Caco-2 (cell line): ENCODE measurements at regions of chr2 and their contacts with region 1.

Region 1: GRCh38 chr2:108583903-108584520 is 49.7 kb downstream of the LIMS1 start:
- DNase-seq: peak; percentile 71 to 80
- H3K4me3 ChIP-seq: no peak overlapping the region
- H3K4me3 Mint-ChIP-seq: no peak overlapping the region
- H3K27ac Mint-ChIP-seq: no peak overlapping the region
- H3K4me1 ChIP-seq: peaks cover 12% of the 10 kb centered on the region; the same call in 1 of the 2 replicates
- H3K4me1 Mint-ChIP-seq: peaks cover 33% of the 10 kb centered on the region
- H3K27me3 ChIP-seq: no peaks in the 10 kb centered on the region
- H3K27me3 Mint-ChIP-seq: no peaks in the 10 kb centered on the region
- CTCF ChIP-seq: peak; percentile 82 to 83

Region 2: GRCh38 chr2:108215794-108216211 is 368.2 kb before region 1 on chr2:
- CTCF ChIA-PET with region 1: interaction called, 3 read pairs
- POLR2A ChIA-PET with region 1: no interaction called
- intact Hi-C with region 1: loop called (anchors 1 kb)
- DNase-seq: peak; percentile 46 to 48
- H3K4me3 ChIP-seq: no peak overlapping the region
- H3K4me3 Mint-ChIP-seq: no peak overlapping the region
- H3K27ac Mint-ChIP-seq: no peak overlapping the region
- H3K4me1 ChIP-seq: peaks cover 5% of the 10 kb centered on the region; the same call in 1 of the 2 replicates
- H3K4me1 Mint-ChIP-seq: no peaks in the 10 kb centered on the region
- H3K27me3 ChIP-seq: no peaks in the 10 kb centered on the region
- H3K27me3 Mint-ChIP-seq: no peaks in the 10 kb centered on the region
- CTCF ChIP-seq: peak; percentile 23 to 49

Region 3: DNA sequence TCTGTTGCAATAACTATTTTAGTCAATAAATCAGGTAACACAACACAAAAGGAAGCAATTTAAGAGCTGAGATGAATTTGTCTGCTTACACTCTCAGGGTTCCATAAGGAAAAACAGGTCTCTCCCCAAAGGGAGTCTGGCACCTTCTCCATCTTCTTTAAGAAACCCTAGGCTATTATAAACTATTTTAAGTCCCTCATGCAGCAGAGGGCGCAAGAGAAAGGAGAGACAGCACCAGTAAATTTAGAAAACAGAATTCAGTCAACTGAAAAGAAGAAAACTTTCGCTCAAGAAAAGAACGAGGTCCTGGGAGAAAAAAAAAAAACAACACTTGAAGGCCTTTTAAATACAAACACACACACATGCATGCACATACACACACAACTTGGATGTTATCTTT is 187.2 kb before region 1 on chr2:
- CTCF ChIA-PET with region 1: no interaction called
- POLR2A ChIA-PET with region 1: no interaction called
- intact Hi-C with region 1: loop called (anchors 1 kb)
- DNase-seq: peak; percentile 49 to 52
- H3K4me3 ChIP-seq: no peak overlapping the region
- H3K4me3 Mint-ChIP-seq: no peak overlapping the region
- H3K27ac Mint-ChIP-seq: no peak overlapping the region
- H3K4me1 ChIP-seq: no peaks in the 10 kb centered on the region
- H3K4me1 Mint-ChIP-seq: no peaks in the 10 kb centered on the region
- H3K27me3 ChIP-seq: no peaks in the 10 kb centered on the region
- H3K27me3 Mint-ChIP-seq: no peaks in the 10 kb centered on the region
- CTCF ChIP-seq: peak; percentile 24 to 35

Region 4: GRCh38 chr2:108423067-108423466 is 160.9 kb before region 1 on chr2:
- CTCF ChIA-PET with region 1: no interaction called
- POLR2A ChIA-PET with region 1: no interaction called
- intact Hi-C with region 1: no loop called
- DNase-seq: peak; percentile 28 to 42
- H3K4me3 ChIP-seq: no peak overlapping the region
- H3K4me3 Mint-ChIP-seq: peak overlapping the region; percentile 1
- H3K27ac Mint-ChIP-seq: peak overlapping the region; percentile 17
- H3K4me1 ChIP-seq: peaks cover 22% of the 10 kb centered on the region
- H3K4me1 Mint-ChIP-seq: peaks cover 27% of the 10 kb centered on the region
- H3K27me3 ChIP-seq: no peaks in the 10 kb centered on the region
- H3K27me3 Mint-ChIP-seq: no peaks in the 10 kb centered on the region
- CTCF ChIP-seq: no peak

Region 5: GRCh38 chr2:108448678-108449493 is 135.1 kb before region 1 on chr2 and contains the start of gene GCC2:
- CTCF ChIA-PET with region 1: interaction called, 4 read pairs
- POLR2A ChIA-PET with region 1: no interaction called
- intact Hi-C with region 1: loop called (anchors 1 kb)
- DNase-seq: peak; percentile 97
- H3K4me3 ChIP-seq: peak within 1 kb of the TSS; percentile 83
- H3K4me3 Mint-ChIP-seq: peak within 1 kb of the TSS; percentile 93
- H3K27ac Mint-ChIP-seq: peak within 1 kb of the TSS; percentile 94
- H3K4me1 ChIP-seq: peaks cover 7% of the 10 kb centered on the region; the same call in 1 of the 2 replicates
- H3K4me1 Mint-ChIP-seq: no peaks in the 10 kb centered on the region
- H3K27me3 ChIP-seq: no peaks in the 10 kb centered on the region
- H3K27me3 Mint-ChIP-seq: no peaks in the 10 kb centered on the region
- CTCF ChIP-seq: no peak
- total RNA-seq, gene GCC2: 46.2 and 49.9 TPM in 2 replicates

Region 6: GRCh38 chr2:108533832-108534583 is 50.0 kb before region 1 on chr2 and contains the start of gene LIMS1:
- CTCF ChIA-PET with region 1: interaction called, 16 read pairs
- POLR2A ChIA-PET with region 1: interaction called, 3 read pairs
- intact Hi-C with region 1: loop called (anchors 1 kb)
- DNase-seq: peak; percentile 92
- H3K4me3 ChIP-seq: peak within 1 kb of the TSS; percentile 95
- H3K4me3 Mint-ChIP-seq: peak within 1 kb of the TSS; percentile 84
- H3K27ac Mint-ChIP-seq: peak within 1 kb of the TSS; percentile 91
- H3K4me1 ChIP-seq: peaks cover 45% of the 10 kb centered on the region
- H3K4me1 Mint-ChIP-seq: peaks cover 30% of the 10 kb centered on the region
- H3K27me3 ChIP-seq: no peaks in the 10 kb centered on the region
- H3K27me3 Mint-ChIP-seq: no peaks in the 10 kb centered on the region
- CTCF ChIP-seq: no peak
- total RNA-seq, gene LIMS1: 67.2 and 75.2 TPM in 2 replicates

Region 7: DNA sequence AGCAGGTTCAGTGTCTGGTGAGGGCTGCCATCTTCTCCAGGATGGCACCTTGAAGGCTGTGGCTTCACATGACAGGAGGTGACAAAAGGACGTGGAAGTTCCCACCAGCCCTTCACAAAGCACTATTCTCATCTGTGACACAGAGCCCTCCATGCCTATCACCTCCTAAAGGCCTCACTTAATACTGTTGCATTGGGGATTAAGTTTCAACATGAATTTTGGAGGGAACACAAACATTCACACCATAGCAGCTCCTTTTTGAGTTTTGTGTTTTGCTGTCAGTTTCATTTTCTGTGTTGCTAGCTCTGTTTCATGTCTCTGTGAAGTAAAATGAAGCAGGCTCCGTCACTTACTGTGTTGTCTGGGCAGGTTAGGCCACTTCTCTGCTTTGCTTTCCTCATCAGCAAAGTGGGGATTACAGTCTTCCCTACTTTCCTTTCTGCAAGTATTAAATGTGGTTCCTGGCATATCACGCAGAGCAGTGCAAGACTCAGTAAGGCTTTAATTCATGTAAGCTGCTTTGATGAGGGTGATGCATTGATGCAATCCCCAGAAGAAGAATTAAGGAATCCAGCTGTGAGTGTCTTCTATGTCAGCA is 18.1 kb before region 1 on chr2:
- CTCF ChIA-PET with region 1: no interaction called
- POLR2A ChIA-PET with region 1: no interaction called
- intact Hi-C with region 1: no loop called
- DNase-seq: no peak
- H3K4me3 ChIP-seq: no peak overlapping the region
- H3K4me3 Mint-ChIP-seq: no peak overlapping the region
- H3K27ac Mint-ChIP-seq: no peak overlapping the region
- H3K4me1 ChIP-seq: no peaks in the 10 kb centered on the region
- H3K4me1 Mint-ChIP-seq: peaks cover 9% of the 10 kb centered on the region
- H3K27me3 ChIP-seq: no peaks in the 10 kb centered on the region
- H3K27me3 Mint-ChIP-seq: no peaks in the 10 kb centered on the region
- CTCF ChIP-seq: no peak

Region 8: GRCh38 chr2:108805782-108806181 is 221.8 kb after region 1 on chr2:
- CTCF ChIA-PET with region 1: no interaction called
- POLR2A ChIA-PET with region 1: no interaction called
- intact Hi-C with region 1: no loop called
- DNase-seq: no peak
- H3K4me3 ChIP-seq: no peak overlapping the region
- H3K4me3 Mint-ChIP-seq: no peak overlapping the region
- H3K27ac Mint-ChIP-seq: no peak overlapping the region
- H3K4me1 ChIP-seq: no peaks in the 10 kb centered on the region
- H3K4me1 Mint-ChIP-seq: peaks cover 7% of the 10 kb centered on the region
- H3K27me3 ChIP-seq: no peaks in the 10 kb centered on the region
- H3K27me3 Mint-ChIP-seq: no peaks in the 10 kb centered on the region
- CTCF ChIP-seq: no peak

Region 9: DNA sequence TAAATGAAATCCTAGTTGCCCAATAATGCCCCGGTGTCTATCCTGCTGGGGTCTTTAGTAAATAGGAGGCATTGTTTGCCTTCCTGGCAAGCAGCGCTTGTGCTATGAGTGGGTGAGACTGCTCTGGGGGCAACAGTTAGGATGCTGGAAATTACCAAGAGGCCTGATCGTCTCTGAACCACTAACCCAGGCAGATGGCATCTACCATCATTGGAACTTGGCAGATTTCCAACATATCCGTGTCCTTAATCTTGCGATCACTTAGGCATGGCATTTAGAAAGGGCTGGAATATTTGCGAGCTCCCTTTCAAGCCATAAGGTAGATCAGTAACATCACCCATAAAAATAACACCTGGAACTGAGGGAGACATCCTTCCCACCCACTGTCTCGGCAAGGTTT is 526.2 kb after region 1 on chr2:
- CTCF ChIA-PET with region 1: no interaction called
- POLR2A ChIA-PET with region 1: no interaction called
- intact Hi-C with region 1: no loop called
- DNase-seq: no peak
- H3K4me3 ChIP-seq: no peak overlapping the region
- H3K4me3 Mint-ChIP-seq: no peak overlapping the region
- H3K27ac Mint-ChIP-seq: no peak overlapping the region
- H3K4me1 ChIP-seq: no peaks in the 10 kb centered on the region
- H3K4me1 Mint-ChIP-seq: no peaks in the 10 kb centered on the region
- H3K27me3 ChIP-seq: no peaks in the 10 kb centered on the region
- H3K27me3 Mint-ChIP-seq: peaks cover 3% of the 10 kb centered on the region
- CTCF ChIP-seq: no peak